Natural killer cell (primary cell): ENCODE measurements at regions of chr1 and their contacts with region 1.

Region 1: DNA sequence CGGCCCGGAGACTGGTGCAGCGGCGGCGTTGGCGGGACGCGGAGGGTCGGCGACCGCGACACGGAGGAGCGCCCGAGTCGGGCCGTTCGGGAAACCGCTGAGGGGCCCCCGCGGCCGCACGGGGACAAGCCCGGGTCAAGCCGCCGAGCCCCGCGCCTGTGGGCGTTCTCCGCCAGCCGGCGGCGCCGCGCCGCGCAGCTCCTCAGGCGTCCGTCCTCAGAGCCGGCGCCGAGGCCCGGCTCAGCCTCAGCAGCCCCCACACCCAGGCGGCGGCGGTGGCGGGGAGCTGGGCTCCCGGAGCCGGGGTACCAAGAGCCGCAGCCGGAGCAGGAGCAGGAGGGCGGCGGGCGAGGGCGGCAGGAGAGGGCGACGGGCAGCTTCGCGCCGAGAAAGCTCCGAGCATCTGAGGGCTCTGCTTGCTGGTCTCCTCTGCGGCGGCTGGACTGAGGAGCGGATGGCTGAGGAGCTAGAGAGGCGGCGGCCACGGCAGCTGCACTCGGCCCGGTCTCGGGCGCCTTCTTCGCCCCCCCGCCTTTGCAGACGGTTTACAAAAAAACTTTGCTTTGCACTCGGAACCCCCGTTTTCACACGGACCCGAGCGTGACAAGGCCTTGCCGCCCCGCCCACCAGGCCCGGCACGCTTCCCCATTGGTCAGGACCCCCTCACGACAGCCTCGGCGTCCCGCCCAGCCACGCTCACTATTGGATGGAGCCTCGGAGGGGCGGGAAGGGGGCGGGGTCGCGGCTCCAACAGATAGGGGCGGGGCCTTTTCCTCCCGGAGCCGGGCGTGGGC is at the start of gene SLC30A1:
- DNase-seq: peak; percentile 99 to 100
- ATAC-seq: peak; percentile 88 to 98 (median 90)
- H3K4me3 ChIP-seq: peak within 1 kb of the TSS; percentile 95
- H3K4me3 Mint-ChIP-seq: peak within 1 kb of the TSS; percentile 94
- H3K27ac ChIP-seq: peak within 1 kb of the TSS; percentile 71
- H3K27ac Mint-ChIP-seq: peak within 1 kb of the TSS; percentile 81 to 83
- H3K4me1 ChIP-seq: peaks cover 39% of the 10 kb centered on the region
- H3K4me1 Mint-ChIP-seq: peaks cover 52 to 57% of the 10 kb centered on the region in 2 donors
- H3K27me3 ChIP-seq: no peaks in the 10 kb centered on the region
- H3K27me3 Mint-ChIP-seq: no peaks in the 10 kb centered on the region
- CTCF ChIP-seq: no peak
- total RNA-seq, gene SLC30A1: 8.4 to 16.0 (median 12.1) TPM

Region 2: GRCh38 chr1:211514030-211514754 is 64.6 kb before region 1 on chr1:
- intact Hi-C with region 1: loop called (anchors 1 kb)
- DNase-seq: peak; percentile 52 to 78
- ATAC-seq: peak; percentile 74 to 79 (median 78)
- H3K4me3 ChIP-seq: no peak overlapping the region
- H3K4me3 Mint-ChIP-seq: peak overlapping the region; percentile 75
- H3K27ac ChIP-seq: no peak overlapping the region
- H3K27ac Mint-ChIP-seq: peak overlapping the region in 1 of 2 donors; percentile 80
- H3K4me1 ChIP-seq: peaks cover 29% of the 10 kb centered on the region
- H3K4me1 Mint-ChIP-seq: peaks cover 10 to 20% of the 10 kb centered on the region in 2 donors
- H3K27me3 ChIP-seq: peaks cover 2% of the 10 kb centered on the region
- H3K27me3 Mint-ChIP-seq: peaks cover 0 to 3% of the 10 kb centered on the region in 2 donors
- CTCF ChIP-seq: peak; percentile 59

Region 3: GRCh38 chr1:211566431-211567025 is 12.3 kb before region 1 on chr1:
- intact Hi-C with region 1: no loop called
- DNase-seq: no peak
- ATAC-seq: no peak
- H3K4me3 ChIP-seq: no peak overlapping the region
- H3K4me3 Mint-ChIP-seq: no peak overlapping the region
- H3K27ac ChIP-seq: no peak overlapping the region
- H3K27ac Mint-ChIP-seq: no peak overlapping the region
- H3K4me1 ChIP-seq: no peaks in the 10 kb centered on the region
- H3K4me1 Mint-ChIP-seq: no peaks in the 10 kb centered on the region
- H3K27me3 ChIP-seq: no peaks in the 10 kb centered on the region
- H3K27me3 Mint-ChIP-seq: peaks cover 0 to 2% of the 10 kb centered on the region in 2 donors
- CTCF ChIP-seq: no peak

Region 4: GRCh38 chr1:211625040-211625439 is 46.2 kb after region 1 on chr1:
- intact Hi-C with region 1: loop called (anchors 1 kb)
- DNase-seq: peak in 1 of 2 donors; percentile 69
- ATAC-seq: peak; percentile 74 to 98 (median 94)
- H3K4me3 ChIP-seq: no peak overlapping the region
- H3K4me3 Mint-ChIP-seq: no peak overlapping the region
- H3K27ac ChIP-seq: no peak overlapping the region
- H3K27ac Mint-ChIP-seq: no peak overlapping the region
- H3K4me1 ChIP-seq: no peaks in the 10 kb centered on the region
- H3K4me1 Mint-ChIP-seq: no peaks in the 10 kb centered on the region
- H3K27me3 ChIP-seq: no peaks in the 10 kb centered on the region
- H3K27me3 Mint-ChIP-seq: peaks cover under 1 to 6% of the 10 kb centered on the region in 2 donors
- CTCF ChIP-seq: peak; percentile 38

Region 5: GRCh38 chr1:211654838-211655787 is 76.3 kb after region 1 on chr1:
- intact Hi-C with region 1: loop called (anchors 1 kb)
- DNase-seq: peak; percentile 72 to 89
- ATAC-seq: peak; percentile 87 to 99 (median 98)
- H3K4me3 ChIP-seq: no peak overlapping the region
- H3K4me3 Mint-ChIP-seq: no peak overlapping the region
- H3K27ac ChIP-seq: no peak overlapping the region
- H3K27ac Mint-ChIP-seq: no peak overlapping the region
- H3K4me1 ChIP-seq: peaks cover 4% of the 10 kb centered on the region
- H3K4me1 Mint-ChIP-seq: peaks cover 5% of the 10 kb centered on the region in 2 donors
- H3K27me3 ChIP-seq: no peaks in the 10 kb centered on the region
- H3K27me3 Mint-ChIP-seq: no peaks in the 10 kb centered on the region
- CTCF ChIP-seq: peak; percentile 88

Region 6: GRCh38 chr1:212035123-212035834 is 456.4 kb after region 1 on chr1 and contains the starts of genes DTL and INTS7:
- intact Hi-C with region 1: loop called (anchors 5 kb)
- DNase-seq: peak; percentile 95 to 100
- ATAC-seq: peak; percentile 89 to 94 (median 90)
- H3K4me3 ChIP-seq: peak within 1 kb of the TSS; percentile 75
- H3K4me3 Mint-ChIP-seq: peak within 1 kb of the TSS; percentile 96
- H3K27ac ChIP-seq: peak within 1 kb of the TSS; percentile 65
- H3K27ac Mint-ChIP-seq: peak within 1 kb of the TSS; percentile 94 to 98
- H3K4me1 ChIP-seq: peaks cover 14% of the 10 kb centered on the region
- H3K4me1 Mint-ChIP-seq: peaks cover 42 to 51% of the 10 kb centered on the region in 2 donors
- H3K27me3 ChIP-seq: no peaks in the 10 kb centered on the region
- H3K27me3 Mint-ChIP-seq: no peaks in the 10 kb centered on the region
- CTCF ChIP-seq: peak; percentile 95
- total RNA-seq, gene DTL: 1.1 to 4.0 (median 3.3) TPM
- total RNA-seq, gene INTS7: 10.0 to 20.3 (median 11.0) TPM